Mammary epithelial cell (primary cell): ENCODE measurements at regions of chr14 and their contacts with region 1.

Region 1: GRCh38 chr14:23034483-23035302 is at the start of gene PSMB5:
- DNase-seq: peak; percentile 93
- H3K4me3 ChIP-seq: peak within 1 kb of the TSS; percentile 82 to 95 (median 88)
- H3K27ac ChIP-seq: peak within 1 kb of the TSS; percentile 83
- H3K4me1 ChIP-seq: peaks cover 7% of the 10 kb centered on the region
- H3K27me3 ChIP-seq: no peaks in the 10 kb centered on the region
- CTCF ChIP-seq: no peak
- total RNA-seq, gene PSMB5: 145 to 152 TPM

Region 2: DNA sequence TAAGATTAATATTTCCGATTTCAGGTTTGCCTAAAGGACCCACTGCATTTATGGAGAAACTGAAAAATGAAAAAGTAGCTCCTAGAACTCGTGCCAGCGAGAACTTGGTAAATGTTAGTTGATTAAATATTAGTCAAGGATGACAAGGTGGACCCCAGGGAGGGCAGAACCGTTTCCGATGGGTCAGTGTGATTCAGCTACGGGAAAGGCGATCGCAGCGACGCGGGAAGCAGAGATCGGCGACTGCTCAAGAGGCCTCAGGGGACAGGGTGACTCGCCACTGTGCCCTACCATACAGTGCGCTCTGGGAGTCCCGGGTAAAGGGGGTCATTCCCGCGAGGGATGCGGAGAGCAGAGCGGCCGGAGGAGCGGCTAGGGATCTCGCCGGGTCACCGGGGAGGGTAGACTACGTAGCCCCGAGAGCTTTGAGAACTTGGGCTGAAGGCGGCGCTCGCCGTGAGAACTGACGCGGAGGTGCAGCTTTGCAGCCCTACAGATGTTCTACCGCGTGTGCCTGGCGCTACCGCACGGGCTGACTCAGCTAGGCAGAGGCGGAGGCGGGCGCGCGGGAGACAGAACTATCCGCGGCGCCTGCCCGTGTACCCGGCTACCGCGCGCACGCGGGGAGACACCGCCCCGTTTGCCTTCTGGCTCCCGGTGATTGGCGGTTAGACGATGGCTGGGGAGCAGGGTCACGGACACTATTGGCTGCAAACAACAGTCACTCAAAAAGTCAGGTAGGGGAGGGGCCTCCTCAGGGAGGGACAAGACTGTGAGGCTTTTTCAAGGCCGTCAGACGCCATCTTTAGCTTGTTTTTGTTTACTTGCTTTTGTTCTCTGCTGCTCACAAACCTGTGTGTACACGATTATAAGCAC is 27.9 kb before region 1 on chr14:
- CTCF ChIA-PET with region 1: no interaction called
- dilution Hi-C with region 1: no loop called
- in situ Hi-C with region 1: no loop called
- intact Hi-C with region 1: loop called (anchors 2 kb)
- DNase-seq: peak; percentile 97
- H3K4me3 ChIP-seq: peak overlapping the region; percentile 59 to 78 (median 63)
- H3K27ac ChIP-seq: peak overlapping the region; percentile 68
- H3K4me1 ChIP-seq: peaks cover 24% of the 10 kb centered on the region
- H3K27me3 ChIP-seq: no peaks in the 10 kb centered on the region
- CTCF ChIP-seq: peak; percentile 22 to 43

Region 3: DNA sequence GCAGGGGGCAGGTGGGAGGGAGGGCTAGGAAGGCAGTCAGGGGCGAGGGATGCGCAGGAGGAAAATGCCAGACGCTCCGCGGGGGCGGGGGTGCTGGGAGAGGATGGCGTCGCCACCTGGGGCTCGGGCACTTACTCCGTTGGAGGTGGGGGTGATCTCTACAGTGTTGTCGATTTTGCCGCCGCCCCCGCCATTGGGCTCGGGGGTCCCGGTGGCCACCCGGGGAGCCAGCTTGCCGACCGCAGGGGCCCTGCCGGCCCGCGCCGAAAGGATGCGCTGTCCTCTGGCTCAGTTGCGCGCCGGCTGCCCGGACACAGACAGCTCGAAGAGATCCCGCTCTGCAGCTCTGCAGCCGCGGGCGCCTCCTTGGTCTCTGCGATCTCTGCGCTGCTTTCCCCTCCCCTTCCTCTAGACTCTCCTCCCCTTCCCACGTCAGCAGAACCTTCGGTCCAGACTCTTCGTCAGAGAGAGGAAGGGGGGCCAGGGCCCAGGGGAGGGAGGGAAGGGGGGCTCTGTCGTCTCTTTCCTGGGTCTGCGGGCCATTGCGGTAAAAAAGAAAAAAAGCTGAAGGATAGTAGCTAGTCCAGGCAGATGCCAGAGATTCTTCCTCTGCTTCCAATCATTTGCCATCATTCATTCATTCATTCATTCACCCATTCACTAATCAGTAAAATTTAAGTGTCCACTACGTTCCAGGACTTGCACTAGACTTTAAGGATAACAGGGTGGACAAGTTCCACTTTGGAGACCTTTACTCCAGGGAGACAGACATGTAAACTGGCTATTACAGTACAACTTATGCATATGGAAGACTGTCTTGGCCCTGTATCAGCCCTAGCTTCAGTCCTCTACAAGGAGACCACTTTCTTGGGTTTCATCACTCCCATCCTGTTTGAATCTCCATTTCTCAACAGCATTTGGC is 318.1 kb after region 1 on chr14 and contains the start of gene SLC22A17:
- CTCF ChIA-PET with region 1: no interaction called
- dilution Hi-C with region 1: no loop called
- in situ Hi-C with region 1: no loop called
- intact Hi-C with region 1: no loop called
- DNase-seq: peak; percentile 60
- H3K4me3 ChIP-seq: peak within 1 kb of the TSS; percentile 31 to 53 (median 44)
- H3K27ac ChIP-seq: no peak within 1 kb of the TSS
- H3K4me1 ChIP-seq: peaks cover 11% of the 10 kb centered on the region
- H3K27me3 ChIP-seq: peaks cover 13% of the 10 kb centered on the region
- CTCF ChIP-seq: no peak
- total RNA-seq, gene SLC22A17: 4.2 to 5.1 TPM